Common myeloid progenitor, CD34-positive (primary cell): ENCODE measurements at regions of chr2 and their contacts with region 1.

Region 1: GRCh38 chr2:216183462-216183861 is 74.3 kb downstream of the XRCC5 start:
- DNase-seq: peak; percentile 16 to 53 (median 43)
- H3K4me3 ChIP-seq: no peak overlapping the region
- H3K27ac ChIP-seq: peak overlapping the region in 1 of 2 experiments; percentile 55
- H3K4me1 ChIP-seq: peaks cover 10 to 43% (median 29%) of the 10 kb centered on the region in 4 experiments
- H3K27me3 ChIP-seq: no peaks in the 10 kb centered on the region

Region 2: DNA sequence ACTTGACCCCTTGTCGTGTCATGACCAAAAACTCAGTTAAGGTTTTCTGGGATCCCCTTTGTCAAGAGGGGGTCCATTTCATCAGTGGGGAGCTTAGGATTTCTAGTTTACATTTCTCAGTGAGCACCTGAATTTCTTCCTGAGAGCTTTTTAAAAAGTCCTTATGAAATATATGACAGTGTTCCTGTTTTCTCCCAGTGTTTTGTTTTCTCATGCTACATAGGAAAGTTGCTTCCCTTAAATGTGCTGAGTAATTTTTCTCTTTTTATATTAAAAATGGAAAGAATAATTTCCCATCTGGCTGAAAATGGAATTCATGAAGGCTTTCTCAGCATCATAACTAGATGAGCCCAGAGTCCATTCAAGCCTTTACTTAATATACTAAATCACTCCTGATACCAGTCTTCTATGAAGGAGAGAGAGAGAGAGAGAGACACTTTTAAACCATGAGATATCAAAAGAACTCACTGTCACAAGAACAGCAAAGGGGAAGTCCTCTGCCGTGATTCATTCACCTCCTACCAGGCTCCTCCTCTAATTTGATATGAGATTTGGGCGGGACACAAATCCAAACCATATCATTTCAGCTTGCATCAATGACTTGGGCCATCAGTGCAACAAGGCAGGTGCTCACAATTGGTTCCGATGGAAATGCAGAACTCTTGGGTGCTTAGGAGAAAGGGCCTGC is 13.2 kb before region 1 on chr2:
- CTCF ChIA-PET with region 1: interaction called, 13 read pairs
- POLR2A ChIA-PET with region 1: no interaction called
- DNase-seq: peak in 2 of 3 donors; percentile 31 to 43
- H3K4me3 ChIP-seq: no peak overlapping the region
- H3K27ac ChIP-seq: no peak overlapping the region
- H3K4me1 ChIP-seq: no peaks in the 10 kb centered on the region
- H3K27me3 ChIP-seq: no peaks in the 10 kb centered on the region